Left ventricle myocardium superior (tissue), 1 donor: ENCODE measurements at regions of chr1 and their contacts with region 1.

Region 1: DNA sequence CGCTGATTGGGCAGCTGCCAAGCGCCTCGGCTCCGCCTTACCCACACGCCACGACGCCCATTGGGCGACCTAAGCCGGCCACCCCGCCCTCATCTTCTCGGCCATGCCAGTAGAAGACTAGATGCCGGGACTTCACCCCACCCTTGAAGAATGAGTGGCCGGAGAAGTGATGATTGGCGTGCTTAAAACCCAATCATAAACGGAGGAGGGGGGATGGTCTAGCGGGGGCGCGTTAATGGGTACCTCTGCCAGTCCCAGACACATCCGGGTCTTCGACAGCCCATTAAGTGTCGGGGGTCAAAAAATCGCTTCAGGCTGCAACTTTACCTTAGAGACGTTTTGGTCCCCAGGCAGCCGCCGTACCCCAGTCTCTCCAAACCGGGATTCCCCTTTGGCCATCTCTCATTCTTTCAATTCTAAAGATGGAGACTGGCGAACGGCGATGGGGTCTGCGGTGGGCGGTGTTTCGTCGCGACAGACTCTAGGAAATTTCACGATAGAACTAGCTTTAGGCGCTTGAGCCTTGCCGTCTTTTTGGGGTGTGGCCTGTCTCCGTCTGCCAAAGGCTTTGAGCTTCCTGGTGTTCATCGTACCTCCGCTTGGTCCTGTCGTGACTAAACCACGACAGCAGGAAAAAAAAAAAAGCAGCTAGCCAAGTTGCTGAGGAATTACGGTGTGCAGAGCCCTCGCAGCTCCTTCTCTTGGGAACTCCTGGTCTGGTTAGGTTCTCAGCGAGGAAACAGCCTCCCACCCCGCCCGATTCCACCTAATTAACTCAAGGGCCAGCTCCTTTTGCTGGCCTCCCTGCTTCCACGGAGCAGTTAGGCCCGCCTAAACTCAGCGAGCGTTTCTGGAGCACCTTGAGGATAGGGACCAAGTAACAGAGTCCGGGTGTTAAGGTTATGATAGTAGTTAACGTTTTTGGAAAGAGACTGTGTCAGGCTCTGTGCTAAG is at the start of gene GATAD2B:
- DNase-seq: peak; percentile 100
- ATAC-seq: peak; percentile 98
- total RNA-seq, gene GATAD2B: 34.6 TPM

Region 2: DNA sequence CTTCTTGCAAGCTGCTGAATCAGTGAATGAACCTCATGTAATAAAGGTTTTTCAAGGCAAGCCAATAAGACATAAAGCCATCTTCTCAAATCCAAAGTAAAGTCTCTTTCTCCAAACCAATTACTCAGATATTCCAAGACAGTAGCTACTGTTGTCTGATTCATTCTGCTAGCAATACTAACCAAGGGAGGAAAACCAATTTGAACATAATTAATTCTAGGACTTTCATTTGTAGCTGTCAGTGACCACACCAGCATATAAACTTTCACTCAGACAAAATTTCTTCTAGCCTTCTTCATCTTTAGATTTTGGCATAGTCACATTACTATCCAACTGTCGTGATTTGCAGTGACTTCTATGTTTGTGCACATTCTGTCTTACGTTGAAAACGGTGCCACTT is 205.9 kb before region 1 on chr1:
- intact Hi-C with region 1: no loop called
- DNase-seq: no peak
- ATAC-seq: no peak

Region 3: DNA sequence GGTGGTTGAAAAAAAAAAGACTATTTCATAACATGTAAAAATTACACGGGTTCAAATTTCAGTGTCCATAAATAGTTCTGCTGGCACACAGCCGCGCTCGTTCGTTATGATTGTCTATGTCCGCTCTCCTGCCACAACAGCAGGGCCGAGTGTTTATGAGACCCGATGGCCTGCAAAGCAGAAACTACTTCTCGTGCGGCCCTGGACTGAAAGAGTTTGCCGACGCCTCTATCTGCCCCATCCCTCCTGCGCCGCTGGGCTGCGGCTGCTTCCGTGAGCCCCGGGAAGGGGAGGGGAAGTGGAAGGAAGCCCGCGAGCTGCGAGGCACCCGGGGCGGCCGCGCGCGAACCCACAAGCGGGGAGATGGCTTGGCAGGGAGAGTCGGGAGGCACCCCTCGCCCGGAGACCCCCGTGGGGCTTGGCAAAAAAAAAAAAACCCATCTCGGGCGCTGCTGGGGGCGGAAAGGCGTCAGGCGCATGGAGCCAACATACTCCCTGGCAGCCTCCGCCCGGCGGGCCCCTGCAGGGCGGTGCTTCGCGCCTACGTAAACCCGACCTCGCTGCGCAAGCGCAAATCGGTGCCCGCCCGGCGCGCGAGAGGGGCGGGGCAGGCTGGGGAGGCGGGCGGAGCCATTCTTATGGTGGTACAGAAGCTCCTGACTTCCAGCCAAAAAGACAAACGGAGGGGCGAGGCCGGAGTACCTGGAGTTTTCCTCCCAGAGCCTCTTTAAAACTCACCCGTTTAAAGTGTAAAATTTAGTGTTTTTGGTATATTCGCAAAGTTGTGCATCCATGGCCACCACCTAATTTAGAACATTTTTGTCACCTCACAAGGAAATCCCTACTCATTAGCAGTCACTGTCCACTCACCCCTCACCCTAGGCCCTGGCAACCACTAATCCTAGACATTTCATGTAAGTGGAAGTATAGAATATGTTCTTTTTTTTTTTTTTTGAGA is 139.7 kb before region 1 on chr1:
- intact Hi-C with region 1: no loop called
- DNase-seq: peak; percentile 96
- ATAC-seq: peak; percentile 98

Region 4: GRCh38 chr1:153827168-153827964 is 95.9 kb before region 1 on chr1:
- intact Hi-C with region 1: loop called (anchors 10 kb)
- DNase-seq: no peak
- ATAC-seq: no peak